Breast epithelium (tissue), 4 donors: ENCODE measurements at regions of chr14 and their contacts with region 1.

Region 1: DNA sequence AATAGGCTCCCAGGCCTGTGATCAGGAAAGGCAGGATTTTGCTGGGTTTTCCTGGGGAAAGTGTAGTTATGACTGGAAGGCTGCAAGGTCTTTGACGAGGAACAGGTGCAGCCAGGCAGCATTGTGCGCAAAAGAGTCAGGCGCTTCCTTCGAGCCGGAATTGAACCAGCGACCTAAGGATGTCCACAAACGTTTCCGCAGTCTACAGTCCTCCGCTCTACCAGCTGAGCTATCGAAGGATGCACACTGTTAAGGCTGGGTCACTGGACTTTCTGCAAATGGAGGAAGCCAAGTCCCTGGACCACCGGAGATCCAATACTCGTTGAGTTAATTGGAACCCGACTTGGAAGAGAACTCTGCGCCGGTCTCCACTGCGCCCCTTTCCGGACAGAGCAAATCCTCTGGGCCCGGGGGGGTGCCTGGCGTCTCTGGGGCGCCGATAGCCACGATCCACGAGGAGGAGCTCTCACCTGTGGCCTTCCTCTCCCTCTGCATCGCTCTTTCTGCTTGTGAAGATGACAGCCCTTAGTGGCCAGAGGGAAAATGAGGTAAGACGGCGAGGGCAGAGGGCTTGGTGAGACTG is 18.4 kb upstream of the OR6S1 start:
- DNase-seq: no peak
- H3K4me3 ChIP-seq: no peak overlapping the region
- H3K27ac ChIP-seq: no peak overlapping the region
- H3K4me1 ChIP-seq: no peaks in the 10 kb centered on the region
- H3K27me3 ChIP-seq: peaks cover 0 to 36% of the 10 kb centered on the region in 2 donors
- CTCF ChIP-seq: no peak
- POLR2A ChIP-seq: no peak

Region 2: GRCh38 chr14:20499108-20499507 is 160.8 kb before region 1 on chr14:
- intact Hi-C with region 1: no loop called
- DNase-seq: no peak
- H3K4me3 ChIP-seq: no peak overlapping the region
- H3K27ac ChIP-seq: no peak overlapping the region
- H3K4me1 ChIP-seq: no peaks in the 10 kb centered on the region
- H3K27me3 ChIP-seq: no peaks in the 10 kb centered on the region
- CTCF ChIP-seq: no peak
- POLR2A ChIP-seq: no peak

Region 3: GRCh38 chr14:20675669-20676068 is 15.8 kb after region 1 on chr14:
- intact Hi-C with region 1: loop called (anchors 2 kb)
- DNase-seq: no peak
- H3K4me3 ChIP-seq: no peak overlapping the region
- H3K27ac ChIP-seq: no peak overlapping the region
- H3K4me1 ChIP-seq: peaks cover 0 to 4% of the 10 kb centered on the region in 2 donors
- H3K27me3 ChIP-seq: no peaks in the 10 kb centered on the region
- CTCF ChIP-seq: no peak
- POLR2A ChIP-seq: no peak